ENCODE measurements at regions of chr2 and their contacts with region 1.

Region 1: GRCh38 chr2:41544709-41545108 is 503.1 kb upstream of the PKDCC start:
- DNase-seq: no peak

Region 2: DNA sequence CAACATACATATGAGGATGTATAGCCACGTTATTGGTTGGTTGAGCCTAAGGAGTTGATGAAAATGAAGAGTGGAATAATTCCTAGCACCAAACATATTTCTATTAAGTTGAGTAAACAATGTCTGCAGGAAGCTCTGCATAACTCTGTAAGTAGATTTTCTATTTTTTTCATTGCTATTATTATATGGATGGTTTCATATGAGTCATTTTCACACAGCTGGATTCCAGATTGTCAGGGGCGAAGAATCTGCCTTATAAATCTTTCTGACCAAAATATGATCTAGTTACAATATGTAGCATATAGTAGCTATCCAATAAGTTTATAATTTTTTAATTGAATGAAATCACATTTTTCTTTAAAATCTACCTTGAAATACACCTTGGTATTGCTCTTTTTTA is 35.1 kb after region 1 on chr2:
- intact Hi-C with region 1: loop called in 1 of 2 experiments (anchors 5 kb)
- DNase-seq: no peak

Measured in posterior vena cava (tissue), 2 donors.